Heart right ventricle (tissue), 16 donors: ENCODE measurements at regions of chr4 and their contacts with region 1.

Region 1: GRCh38 chr4:121900132-121900983 is 30.1 kb upstream of the BBS7 start:
- DNase-seq: peak in 1 of 2 donors; percentile 34
- ATAC-seq: peak in 3 of 8 donors; percentile 39 to 62 (median 56)
- H3K4me3 ChIP-seq: no peak overlapping the region
- H3K27ac ChIP-seq: no peak overlapping the region
- H3K4me1 ChIP-seq: no peaks in the 10 kb centered on the region
- H3K27me3 ChIP-seq: peaks cover 0 to 8% (median 0%) of the 10 kb centered on the region in 7 donors
- CTCF ChIP-seq: peak; percentile 43 to 76 (median 70)

Region 2: GRCh38 chr4:122224348-122224747 is 324.0 kb after region 1 on chr4:
- intact Hi-C with region 1: loop called in 3 of 10 experiments (anchors 2 to 5 kb)
- DNase-seq: peak in 1 of 2 donors; percentile 5
- ATAC-seq: no peak
- H3K4me3 ChIP-seq: no peak overlapping the region
- H3K27ac ChIP-seq: no peak overlapping the region
- H3K4me1 ChIP-seq: peaks cover 0 to 4% (median 0%) of the 10 kb centered on the region in 9 donors
- H3K27me3 ChIP-seq: no peaks in the 10 kb centered on the region
- CTCF ChIP-seq: peak in 4 of 9 donors; percentile 29 to 45 (median 34)

Region 3: GRCh38 chr4:122229857-122230256 is 329.5 kb after region 1 on chr4:
- intact Hi-C with region 1: loop called in 2 of 10 experiments (anchors 2 to 5 kb)
- DNase-seq: no peak
- ATAC-seq: no peak
- H3K4me3 ChIP-seq: no peak overlapping the region
- H3K27ac ChIP-seq: no peak overlapping the region
- H3K4me1 ChIP-seq: no peaks in the 10 kb centered on the region
- H3K27me3 ChIP-seq: no peaks in the 10 kb centered on the region
- CTCF ChIP-seq: no peak

Region 4: DNA sequence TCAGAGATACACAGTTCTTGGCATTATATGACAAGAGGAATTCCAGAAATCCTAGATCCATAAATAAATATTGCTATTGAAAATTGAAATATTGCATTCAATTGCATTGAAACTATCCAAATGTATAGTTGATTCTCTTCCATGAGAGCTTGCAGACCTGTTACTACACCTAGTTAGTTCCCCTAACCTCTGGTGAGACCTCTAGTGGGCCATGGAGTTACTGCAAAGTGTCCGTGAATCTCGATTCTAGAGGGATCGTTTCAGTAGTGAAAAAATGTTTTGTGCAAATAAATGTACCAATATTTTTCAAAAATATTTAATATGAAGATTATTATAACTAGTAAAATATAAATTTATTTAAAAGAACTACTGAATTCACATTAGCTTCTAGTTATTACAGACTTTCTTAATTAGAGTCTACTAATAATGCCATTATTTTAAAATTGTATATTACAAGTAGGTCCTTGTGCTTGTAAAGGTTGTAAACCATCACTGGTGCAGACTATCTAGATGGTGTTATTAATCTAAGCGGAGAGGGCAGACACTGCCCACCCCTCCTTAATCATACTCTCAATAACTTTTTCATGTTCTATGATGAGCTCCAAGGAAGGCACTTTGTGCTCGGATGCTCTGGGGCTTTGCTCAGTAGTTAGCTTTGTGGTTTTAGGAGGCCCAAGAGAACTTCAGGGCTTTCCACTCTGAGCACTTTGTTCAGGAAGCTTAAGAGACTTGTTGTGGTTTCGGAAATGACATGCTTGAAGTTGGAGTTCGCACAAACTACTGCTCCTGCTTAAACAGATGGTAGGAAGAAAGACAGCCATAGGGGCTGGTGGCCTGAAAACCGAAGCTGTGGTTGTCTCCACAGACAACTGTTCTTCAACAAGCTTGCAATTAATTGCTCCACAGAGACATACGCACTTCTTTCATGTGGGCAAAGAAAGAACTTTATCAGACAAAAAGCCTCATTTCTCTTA is 677.7 kb after region 1 on chr4:
- intact Hi-C with region 1: loop called in 3 of 10 experiments (anchors 5 to 10 kb)
- DNase-seq: peak in 1 of 2 donors; percentile 5
- ATAC-seq: no peak
- H3K4me3 ChIP-seq: no peak overlapping the region
- H3K27ac ChIP-seq: no peak overlapping the region
- H3K4me1 ChIP-seq: peaks cover 0 to 7% (median 0%) of the 10 kb centered on the region in 9 donors
- H3K27me3 ChIP-seq: no peaks in the 10 kb centered on the region
- CTCF ChIP-seq: peak; percentile 18 to 80 (median 63)